Esophagus squamous epithelium (tissue), 5 donors: ENCODE measurements at regions of chr7 and their contacts with region 1.

Region 1: DNA sequence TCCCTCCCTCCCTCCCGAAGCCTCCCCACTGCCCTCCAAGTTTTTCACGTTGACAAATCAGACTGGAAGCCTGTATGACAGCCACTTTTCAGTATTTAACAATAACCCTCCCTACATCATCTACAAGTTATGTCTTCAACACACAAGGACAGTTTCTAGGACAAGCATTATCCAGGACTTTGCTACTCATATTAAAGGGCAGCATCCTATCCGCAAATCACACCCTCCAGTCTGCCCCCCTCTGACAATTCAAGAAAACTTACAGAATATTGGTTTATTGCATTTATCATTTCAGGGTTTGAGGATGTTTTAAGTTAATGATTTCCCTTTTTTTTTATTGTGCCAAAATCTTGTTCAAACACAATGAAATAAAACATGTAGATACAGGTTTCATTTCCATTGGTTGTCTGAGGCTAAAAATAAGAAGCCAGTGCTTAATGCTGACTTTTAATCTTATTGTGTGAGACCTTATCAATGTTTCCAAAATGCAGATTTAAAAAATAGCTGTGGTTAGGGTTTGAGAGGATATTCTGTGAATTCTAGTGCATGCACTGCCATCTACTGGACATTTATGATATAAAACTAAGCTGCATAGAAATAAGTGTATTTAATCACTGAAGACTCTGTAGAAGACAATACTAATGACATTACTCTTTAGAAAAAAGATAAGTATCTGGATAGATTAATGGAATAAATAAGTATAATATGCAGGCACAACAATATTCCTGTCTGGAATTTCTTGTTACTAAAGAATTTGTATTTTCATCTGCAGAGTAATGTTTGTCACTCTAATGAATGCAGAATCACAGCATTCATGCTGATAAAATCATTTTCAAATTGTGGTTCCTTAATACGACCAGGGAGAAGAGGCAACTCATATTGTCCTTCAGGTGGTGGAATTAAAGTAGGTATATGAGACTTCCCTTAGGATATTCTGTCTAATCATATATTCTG is 64.1 kb downstream of the CAV1 start:
- DNase-seq: no peak
- H3K4me3 ChIP-seq: no peak overlapping the region
- H3K27ac ChIP-seq: peak overlapping the region in 2 of 4 donors; percentile 1 to 23
- H3K4me1 ChIP-seq: peaks cover 0 to 28% (median 10%) of the 10 kb centered on the region in 3 donors
- H3K27me3 ChIP-seq: peaks cover 0 to 15% (median 0%) of the 10 kb centered on the region in 4 donors
- CTCF ChIP-seq: peak; percentile 34 to 87 (median 70)
- POLR2A ChIP-seq: no peak

Region 2: GRCh38 chr7:116173051-116174028 is 415.6 kb before region 1 on chr7:
- intact Hi-C with region 1: loop called (anchors 10 kb)
- DNase-seq: no peak
- H3K4me3 ChIP-seq: no peak overlapping the region
- H3K27ac ChIP-seq: no peak overlapping the region
- H3K4me1 ChIP-seq: no peaks in the 10 kb centered on the region
- H3K27me3 ChIP-seq: no peaks in the 10 kb centered on the region
- CTCF ChIP-seq: peak; percentile 27 to 72 (median 60)
- POLR2A ChIP-seq: no peak

Region 3: DNA sequence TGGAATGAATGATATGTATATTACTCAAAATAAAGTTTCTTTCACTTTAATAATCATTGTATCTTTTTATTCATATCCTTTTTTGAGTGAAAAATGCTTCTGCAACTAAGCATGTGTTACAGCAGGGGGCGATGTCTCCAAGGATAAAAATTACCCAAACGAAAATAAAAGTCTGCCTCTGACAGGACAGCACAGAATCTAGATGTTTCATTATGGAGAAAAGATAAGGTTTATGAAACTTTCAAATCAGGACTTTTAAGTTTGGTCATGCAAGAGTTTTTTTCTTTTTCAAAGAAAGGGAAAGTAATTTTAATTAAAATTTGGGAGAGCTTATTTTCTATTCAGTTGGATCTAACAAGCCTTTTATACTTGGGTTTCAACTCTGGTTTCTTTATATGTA is 330.2 kb before region 1 on chr7:
- intact Hi-C with region 1: loop called (anchors 2 kb)
- DNase-seq: no peak
- H3K4me3 ChIP-seq: no peak overlapping the region
- H3K27ac ChIP-seq: peak overlapping the region in 2 of 4 donors; percentile 19 to 49
- H3K4me1 ChIP-seq: peaks cover 0 to 22% (median 3%) of the 10 kb centered on the region in 3 donors
- H3K27me3 ChIP-seq: no peaks in the 10 kb centered on the region
- CTCF ChIP-seq: peak; percentile 69 to 94 (median 84)
- POLR2A ChIP-seq: no peak

Region 4: DNA sequence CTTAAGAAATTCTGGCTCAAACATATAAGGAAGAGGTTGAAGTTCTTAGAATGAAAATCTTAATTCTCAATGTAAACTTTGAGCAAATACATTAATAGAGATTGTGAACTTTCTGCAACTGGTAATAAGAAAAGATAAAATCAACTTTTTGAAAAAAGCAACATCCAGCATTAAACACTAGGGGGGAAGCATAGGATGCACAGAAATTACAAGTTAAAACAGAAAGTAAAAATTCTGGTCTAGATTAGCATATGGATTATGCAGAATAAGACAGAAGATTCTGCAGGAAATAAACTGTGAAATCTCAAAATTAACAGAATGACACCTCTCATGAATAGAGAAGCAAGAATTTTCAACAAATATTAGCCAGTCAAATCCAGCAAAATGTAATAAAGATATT is 127.4 kb before region 1 on chr7:
- intact Hi-C with region 1: no loop called
- DNase-seq: no peak
- H3K4me3 ChIP-seq: no peak overlapping the region
- H3K27ac ChIP-seq: no peak overlapping the region
- H3K4me1 ChIP-seq: no peaks in the 10 kb centered on the region
- H3K27me3 ChIP-seq: no peaks in the 10 kb centered on the region
- CTCF ChIP-seq: no peak
- POLR2A ChIP-seq: no peak

Region 5: DNA sequence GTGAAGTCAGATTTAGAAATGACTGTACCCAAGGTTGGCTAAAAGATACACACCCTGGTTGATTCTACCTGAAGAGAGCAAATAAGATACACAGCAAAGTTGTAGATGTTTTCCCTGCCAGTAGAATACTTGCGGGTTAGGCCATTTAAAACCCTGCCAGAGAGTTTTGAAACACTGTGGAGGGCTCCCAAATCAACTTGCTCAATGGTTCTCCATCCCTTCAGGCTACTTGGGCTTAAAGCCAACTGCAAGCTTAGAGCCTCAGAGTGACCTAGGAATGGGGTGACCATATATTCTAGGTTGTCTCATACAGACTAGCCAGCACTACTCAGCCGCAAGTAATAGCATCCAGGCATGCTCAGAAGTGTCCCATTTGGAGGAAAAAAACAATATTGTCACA is 54.1 kb before region 1 on chr7:
- intact Hi-C with region 1: loop called (anchors 10 kb)
- DNase-seq: no peak
- H3K4me3 ChIP-seq: no peak overlapping the region
- H3K27ac ChIP-seq: peak overlapping the region in 2 of 4 donors; percentile 23 to 31
- H3K4me1 ChIP-seq: peaks cover 0 to 35% (median 27%) of the 10 kb centered on the region in 3 donors
- H3K27me3 ChIP-seq: no peaks in the 10 kb centered on the region
- CTCF ChIP-seq: no peak
- POLR2A ChIP-seq: no peak

Region 6: DNA sequence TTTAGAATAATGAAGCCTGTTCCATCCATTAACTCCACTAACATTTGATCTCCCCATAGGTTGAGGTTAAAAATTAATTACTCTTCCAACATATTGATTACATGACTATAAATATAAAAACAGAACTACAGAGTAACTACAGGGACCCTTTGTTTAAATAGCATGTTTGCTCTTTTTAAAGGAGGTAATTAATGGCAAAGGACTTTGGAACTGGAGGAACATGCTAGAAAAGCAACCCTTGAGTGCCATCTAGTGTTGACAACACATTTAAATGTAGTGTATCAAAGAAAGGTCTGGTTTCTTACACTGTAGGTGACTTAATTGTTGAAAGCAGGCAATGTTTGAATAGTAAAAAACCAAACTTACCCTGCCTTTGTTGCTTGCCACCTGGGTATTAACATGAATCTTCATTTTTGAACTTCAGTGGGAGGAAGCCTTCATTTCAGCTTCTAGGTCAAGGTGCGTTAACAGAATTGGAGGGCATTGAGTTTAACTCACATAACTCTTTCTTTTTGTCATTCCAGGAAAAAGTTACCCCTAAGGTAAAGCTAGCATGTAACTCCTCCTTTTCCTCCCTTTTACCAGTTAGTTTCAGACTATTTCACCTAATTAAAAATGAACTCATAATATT is 220.8 kb after region 1 on chr7:
- intact Hi-C with region 1: loop called (anchors 5 kb)
- DNase-seq: no peak
- H3K4me3 ChIP-seq: no peak overlapping the region
- H3K27ac ChIP-seq: no peak overlapping the region
- H3K4me1 ChIP-seq: peaks cover 0 to 12% (median 0%) of the 10 kb centered on the region in 3 donors
- H3K27me3 ChIP-seq: no peaks in the 10 kb centered on the region
- CTCF ChIP-seq: peak in 5 of 6 experiments; percentile 52 to 77 (median 66)
- POLR2A ChIP-seq: no peak